CD4-positive, alpha-beta T cell (primary cell): ENCODE measurements at regions of chrX and their contacts with region 1.

Region 1: GRCh38 chrX:41116948-41117347 is 31.7 kb downstream of the USP9X start:
- DNase-seq: peak in 3 of 14 experiments; percentile 51 to 76 (median 64)
- ATAC-seq: peak; percentile 62
- H3K4me3 ChIP-seq: no peak overlapping the region
- H3K4me3 Mint-ChIP-seq: peak overlapping the region; percentile 64
- H3K27ac ChIP-seq: no peak overlapping the region
- H3K27ac Mint-ChIP-seq: peak overlapping the region; percentile 80
- H3K4me1 ChIP-seq: peaks cover 31% of the 10 kb centered on the region
- H3K4me1 Mint-ChIP-seq: peaks cover 74% of the 10 kb centered on the region
- H3K27me3 ChIP-seq: no peaks in the 10 kb centered on the region
- H3K27me3 Mint-ChIP-seq: no peaks in the 10 kb centered on the region
- CTCF ChIP-seq: no peak

Region 2: GRCh38 chrX:40719218-40719617 is 397.7 kb before region 1 on chrX:
- CTCF ChIA-PET with region 1: no interaction called
- POLR2A ChIA-PET with region 1: no interaction called
- intact Hi-C with region 1: no loop called
- DNase-seq: no peak
- ATAC-seq: no peak
- H3K4me3 ChIP-seq: no peak overlapping the region
- H3K4me3 Mint-ChIP-seq: no peak overlapping the region
- H3K27ac ChIP-seq: no peak overlapping the region
- H3K27ac Mint-ChIP-seq: peak overlapping the region; percentile 19
- H3K4me1 ChIP-seq: peaks cover 7% of the 10 kb centered on the region
- H3K4me1 Mint-ChIP-seq: peaks cover 75% of the 10 kb centered on the region
- H3K27me3 ChIP-seq: no peaks in the 10 kb centered on the region
- H3K27me3 Mint-ChIP-seq: no peaks in the 10 kb centered on the region
- CTCF ChIP-seq: no peak

Region 3: GRCh38 chrX:40792433-40792832 is 324.5 kb before region 1 on chrX:
- CTCF ChIA-PET with region 1: interaction called, 3 read pairs
- POLR2A ChIA-PET with region 1: no interaction called
- intact Hi-C with region 1: loop called in 1 of 2 experiments (anchors 10 kb)
- DNase-seq: no peak
- ATAC-seq: no peak
- H3K4me3 ChIP-seq: no peak overlapping the region
- H3K4me3 Mint-ChIP-seq: no peak overlapping the region
- H3K27ac ChIP-seq: no peak overlapping the region
- H3K27ac Mint-ChIP-seq: no peak overlapping the region
- H3K4me1 ChIP-seq: peaks cover 5% of the 10 kb centered on the region
- H3K4me1 Mint-ChIP-seq: peaks cover 5% of the 10 kb centered on the region
- H3K27me3 ChIP-seq: no peaks in the 10 kb centered on the region
- H3K27me3 Mint-ChIP-seq: no peaks in the 10 kb centered on the region
- CTCF ChIP-seq: no peak

Region 4: GRCh38 chrX:40877887-40878286 is 239.1 kb before region 1 on chrX:
- CTCF ChIA-PET with region 1: interaction called, 23 read pairs
- POLR2A ChIA-PET with region 1: interaction called, 11 read pairs
- intact Hi-C with region 1: loop called (anchors 1 to 2 kb)
- DNase-seq: peak in 4 of 14 experiments; percentile 27 to 60 (median 52)
- ATAC-seq: no peak
- H3K4me3 ChIP-seq: no peak overlapping the region
- H3K4me3 Mint-ChIP-seq: no peak overlapping the region
- H3K27ac ChIP-seq: no peak overlapping the region
- H3K27ac Mint-ChIP-seq: no peak overlapping the region
- H3K4me1 ChIP-seq: no peaks in the 10 kb centered on the region
- H3K4me1 Mint-ChIP-seq: no peaks in the 10 kb centered on the region
- H3K27me3 ChIP-seq: no peaks in the 10 kb centered on the region
- H3K27me3 Mint-ChIP-seq: no peaks in the 10 kb centered on the region
- CTCF ChIP-seq: peak; percentile 55

Region 5: GRCh38 chrX:40933132-40933705 is 183.7 kb before region 1 on chrX:
- CTCF ChIA-PET with region 1: no interaction called
- POLR2A ChIA-PET with region 1: interaction called, 4 read pairs
- intact Hi-C with region 1: loop called (anchors 5 kb)
- DNase-seq: peak in 4 of 14 experiments; percentile 21 to 53 (median 47)
- ATAC-seq: peak; percentile 49
- H3K4me3 ChIP-seq: peak overlapping the region; percentile 43
- H3K4me3 Mint-ChIP-seq: peak overlapping the region; percentile 92
- H3K27ac ChIP-seq: peak overlapping the region; percentile 29 to 66
- H3K27ac Mint-ChIP-seq: peak overlapping the region; percentile 92
- H3K4me1 ChIP-seq: peaks cover 22% of the 10 kb centered on the region
- H3K4me1 Mint-ChIP-seq: peaks cover 14% of the 10 kb centered on the region
- H3K27me3 ChIP-seq: no peaks in the 10 kb centered on the region
- H3K27me3 Mint-ChIP-seq: no peaks in the 10 kb centered on the region
- CTCF ChIP-seq: no peak

Region 6: GRCh38 chrX:41010188-41010846 is 106.6 kb before region 1 on chrX:
- CTCF ChIA-PET with region 1: interaction called, 5 read pairs
- POLR2A ChIA-PET with region 1: no interaction called
- intact Hi-C with region 1: loop called (anchors 5 to 10 kb)
- DNase-seq: peak in 13 of 14 experiments; percentile 6 to 79 (median 29)
- ATAC-seq: peak; percentile 87
- H3K4me3 ChIP-seq: peak overlapping the region; percentile 49
- H3K4me3 Mint-ChIP-seq: peak overlapping the region; percentile 84
- H3K27ac ChIP-seq: peak overlapping the region; percentile 21 to 73
- H3K27ac Mint-ChIP-seq: peak overlapping the region; percentile 89
- H3K4me1 ChIP-seq: peaks cover 12% of the 10 kb centered on the region
- H3K4me1 Mint-ChIP-seq: peaks cover 23% of the 10 kb centered on the region
- H3K27me3 ChIP-seq: no peaks in the 10 kb centered on the region
- H3K27me3 Mint-ChIP-seq: no peaks in the 10 kb centered on the region
- CTCF ChIP-seq: no peak

Region 7: GRCh38 chrX:41033299-41033698 is 83.6 kb before region 1 on chrX:
- CTCF ChIA-PET with region 1: no interaction called
- POLR2A ChIA-PET with region 1: no interaction called
- intact Hi-C with region 1: no loop called
- DNase-seq: peak in 1 of 14 experiments; percentile 8
- ATAC-seq: no peak
- H3K4me3 ChIP-seq: no peak overlapping the region
- H3K4me3 Mint-ChIP-seq: no peak overlapping the region
- H3K27ac ChIP-seq: no peak overlapping the region
- H3K27ac Mint-ChIP-seq: no peak overlapping the region
- H3K4me1 ChIP-seq: no peaks in the 10 kb centered on the region
- H3K4me1 Mint-ChIP-seq: no peaks in the 10 kb centered on the region
- H3K27me3 ChIP-seq: no peaks in the 10 kb centered on the region
- H3K27me3 Mint-ChIP-seq: no peaks in the 10 kb centered on the region
- CTCF ChIP-seq: no peak

Region 8: DNA sequence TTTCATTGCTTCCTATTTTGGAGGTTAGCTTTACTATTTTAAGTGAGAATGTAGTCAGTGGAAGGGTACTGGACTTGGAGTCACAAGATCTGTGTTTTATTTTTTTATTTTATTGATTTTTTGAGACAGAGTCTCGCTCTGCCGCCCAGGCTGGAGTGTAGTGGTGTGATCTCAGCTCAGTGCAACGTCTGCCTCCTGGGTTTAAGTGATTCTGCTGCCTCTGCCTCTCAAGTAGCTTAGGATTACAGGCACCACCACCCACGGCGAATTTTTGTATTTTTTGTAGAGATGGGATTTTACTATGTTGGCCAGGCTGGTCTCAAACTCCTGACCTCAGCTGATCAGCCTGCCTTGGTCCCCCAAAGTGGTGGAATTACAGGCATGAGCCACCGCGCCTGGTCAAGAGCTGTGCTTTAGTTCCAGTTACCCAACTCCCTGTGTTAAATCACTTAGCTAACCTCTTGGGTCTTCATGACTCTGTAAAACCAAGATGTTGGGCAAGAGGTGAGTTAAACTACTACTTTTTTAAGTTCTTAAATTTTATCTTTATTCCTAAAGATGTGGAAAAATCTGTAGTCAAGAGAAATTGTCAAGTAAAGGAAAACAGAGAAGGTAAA is 20.5 kb before region 1 on chrX:
- CTCF ChIA-PET with region 1: interaction called, 16 read pairs
- POLR2A ChIA-PET with region 1: interaction called, 5 read pairs
- intact Hi-C with region 1: loop called in 1 of 2 experiments (anchors 2 kb)
- DNase-seq: no peak
- ATAC-seq: no peak
- H3K4me3 ChIP-seq: no peak overlapping the region
- H3K4me3 Mint-ChIP-seq: peak overlapping the region; percentile 15
- H3K27ac ChIP-seq: no peak overlapping the region
- H3K27ac Mint-ChIP-seq: no peak overlapping the region
- H3K4me1 ChIP-seq: peaks cover 44% of the 10 kb centered on the region
- H3K4me1 Mint-ChIP-seq: peaks cover 73% of the 10 kb centered on the region
- H3K27me3 ChIP-seq: no peaks in the 10 kb centered on the region
- H3K27me3 Mint-ChIP-seq: no peaks in the 10 kb centered on the region
- CTCF ChIP-seq: no peak

Region 9: GRCh38 chrX:41105005-41105404 is 11.9 kb before region 1 on chrX:
- CTCF ChIA-PET with region 1: interaction called, 16 read pairs
- POLR2A ChIA-PET with region 1: no interaction called
- intact Hi-C with region 1: no loop called
- DNase-seq: no peak
- ATAC-seq: no peak
- H3K4me3 ChIP-seq: no peak overlapping the region
- H3K4me3 Mint-ChIP-seq: peak overlapping the region; percentile 9
- H3K27ac ChIP-seq: no peak overlapping the region
- H3K27ac Mint-ChIP-seq: peak overlapping the region; percentile 69
- H3K4me1 ChIP-seq: peaks cover 13% of the 10 kb centered on the region
- H3K4me1 Mint-ChIP-seq: peaks cover 64% of the 10 kb centered on the region
- H3K27me3 ChIP-seq: no peaks in the 10 kb centered on the region
- H3K27me3 Mint-ChIP-seq: no peaks in the 10 kb centered on the region
- CTCF ChIP-seq: no peak

Region 10: GRCh38 chrX:41381685-41382084 is 264.7 kb after region 1 on chrX:
- CTCF ChIA-PET with region 1: no interaction called
- POLR2A ChIA-PET with region 1: no interaction called
- intact Hi-C with region 1: no loop called
- DNase-seq: peak in 2 of 14 experiments; percentile 29 to 48
- ATAC-seq: no peak
- H3K4me3 ChIP-seq: no peak overlapping the region
- H3K4me3 Mint-ChIP-seq: no peak overlapping the region
- H3K27ac ChIP-seq: no peak overlapping the region
- H3K27ac Mint-ChIP-seq: no peak overlapping the region
- H3K4me1 ChIP-seq: peaks cover 19% of the 10 kb centered on the region
- H3K4me1 Mint-ChIP-seq: peaks cover 17% of the 10 kb centered on the region
- H3K27me3 ChIP-seq: no peaks in the 10 kb centered on the region
- H3K27me3 Mint-ChIP-seq: no peaks in the 10 kb centered on the region
- CTCF ChIP-seq: no peak